Activated CD4-positive, alpha-beta memory T cell treated with anti-CD3 and anti-CD28 coated beads, Interleukin-2, amount 10 ng/mL, durations not matched to agents 7 days and 5 days (primary cell): ENCODE measurements at regions of chr11 and their contacts with region 1.

Region 1: DNA sequence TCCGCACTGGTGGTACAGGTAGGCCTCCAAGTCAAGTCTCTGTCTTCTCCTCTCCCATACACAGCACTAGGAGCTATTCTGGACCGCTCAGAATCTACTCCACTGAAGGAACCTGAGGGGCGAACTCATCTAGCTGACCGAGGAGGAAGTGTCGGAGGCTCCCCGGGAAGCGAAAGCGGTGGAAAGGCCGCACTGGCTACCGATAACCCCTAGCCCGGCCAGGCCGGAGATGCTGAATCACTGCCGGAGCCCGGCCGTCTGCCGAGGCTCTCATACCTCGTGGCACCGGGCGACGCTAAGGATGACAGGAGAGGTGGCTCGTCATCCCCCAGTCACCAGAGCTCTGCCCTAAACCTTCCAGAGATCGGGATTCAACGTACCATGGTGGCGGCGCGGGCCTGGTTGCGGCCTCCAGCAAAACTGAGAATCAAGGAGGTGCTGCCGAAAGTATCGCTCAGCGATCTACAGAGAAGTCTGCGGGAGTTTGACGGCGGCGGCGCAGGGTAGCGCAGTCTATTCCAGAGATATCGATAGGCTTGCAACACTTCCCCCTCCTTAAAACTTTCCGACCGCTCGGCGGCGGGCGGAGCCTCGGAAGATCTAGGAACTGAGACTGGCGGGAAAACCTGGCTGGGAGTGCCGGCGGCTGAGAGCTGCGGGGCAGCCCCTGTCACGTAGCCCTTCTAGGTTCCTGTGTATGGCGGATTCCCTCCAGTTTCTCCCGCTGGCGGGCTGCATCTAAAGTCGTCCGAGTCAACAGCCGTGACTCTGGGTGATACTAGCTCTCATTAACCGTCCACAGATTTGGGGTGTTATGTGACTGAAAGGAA is at the start of gene PSMA1:
- DNase-seq: peak; percentile 95
- H3K4me3 Mint-ChIP-seq: peak within 1 kb of the TSS; percentile 92
- H3K27ac Mint-ChIP-seq: peak within 1 kb of the TSS; percentile 94
- H3K4me1 Mint-ChIP-seq: peaks cover 25% of the 10 kb centered on the region
- H3K27me3 Mint-ChIP-seq: no peaks in the 10 kb centered on the region
- total RNA-seq, gene PSMA1: 232 to 238 TPM

Region 2: DNA sequence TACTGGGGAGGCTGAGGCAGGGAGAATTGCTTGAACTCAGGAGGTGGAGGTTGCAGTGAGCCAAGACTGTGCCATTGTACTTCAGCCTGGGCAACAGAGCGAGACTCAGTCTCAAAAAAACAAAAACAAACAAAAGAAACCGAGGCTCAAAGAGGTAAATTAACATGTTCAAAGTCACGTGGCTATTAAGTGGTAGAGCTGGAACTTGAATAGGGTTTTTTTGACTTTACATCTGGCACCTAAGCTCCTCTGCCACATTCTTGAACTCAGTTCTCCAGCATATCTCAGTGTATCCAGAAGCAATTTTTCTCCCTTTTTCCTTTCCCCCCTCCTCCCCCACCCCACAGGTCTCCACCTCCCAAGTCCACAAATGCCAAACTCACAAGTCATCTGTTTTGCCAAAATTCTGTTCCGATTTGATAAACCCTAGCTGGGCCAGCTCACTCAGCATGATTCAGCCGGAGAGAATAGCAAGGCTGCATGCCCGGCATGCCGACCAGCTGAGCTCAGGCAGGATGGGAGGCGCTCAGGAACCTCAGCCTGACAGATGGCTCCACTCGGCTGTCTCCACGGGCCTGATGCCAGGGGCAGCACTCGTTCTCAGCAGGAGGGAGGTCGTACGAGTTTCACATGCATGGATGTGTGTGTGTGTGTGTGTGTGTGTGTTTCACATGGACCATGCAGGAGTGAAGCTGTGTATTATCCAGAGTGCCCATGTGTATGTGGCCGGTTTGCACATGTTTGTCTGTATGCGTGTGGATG is 97.9 kb before region 1 on chr11:
- CTCF ChIA-PET with region 1: no interaction called
- POLR2A ChIA-PET with region 1: no interaction called
- DNase-seq: no peak
- H3K4me3 Mint-ChIP-seq: no peak overlapping the region
- H3K27ac Mint-ChIP-seq: no peak overlapping the region
- H3K4me1 Mint-ChIP-seq: peaks cover 8% of the 10 kb centered on the region
- H3K27me3 Mint-ChIP-seq: no peaks in the 10 kb centered on the region

Region 3: GRCh38 chr11:14499554-14500180 is 20.5 kb before region 1 on chr11 and contains the start of gene COPB1:
- CTCF ChIA-PET with region 1: interaction called, 8 read pairs
- POLR2A ChIA-PET with region 1: interaction called, 48 read pairs
- DNase-seq: peak; percentile 96
- H3K4me3 Mint-ChIP-seq: peak within 1 kb of the TSS; percentile 98
- H3K27ac Mint-ChIP-seq: peak within 1 kb of the TSS; percentile 91
- H3K4me1 Mint-ChIP-seq: peaks cover 45% of the 10 kb centered on the region
- H3K27me3 Mint-ChIP-seq: no peaks in the 10 kb centered on the region
- total RNA-seq, gene COPB1: 98.0 to 100.0 TPM

Region 4: DNA sequence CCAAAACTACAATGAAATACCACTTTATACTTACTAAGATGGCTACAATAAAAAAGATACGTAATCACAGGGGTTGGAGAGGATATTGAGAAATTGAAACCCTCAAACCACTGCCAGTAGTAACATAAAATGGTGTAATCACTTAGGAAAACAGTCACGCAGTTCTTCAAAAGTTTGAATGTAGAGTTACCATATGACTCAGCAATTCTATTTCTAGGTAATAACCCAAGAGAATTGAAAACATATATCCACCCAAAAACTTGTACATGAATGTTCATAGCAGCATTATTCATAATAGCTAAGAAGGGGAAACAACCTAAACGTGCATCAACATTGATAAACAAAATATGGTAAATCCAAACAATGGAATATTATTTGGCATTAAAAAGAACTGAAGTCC is 24.5 kb after region 1 on chr11:
- CTCF ChIA-PET with region 1: no interaction called
- POLR2A ChIA-PET with region 1: interaction called, 13 read pairs
- DNase-seq: no peak
- H3K4me3 Mint-ChIP-seq: no peak overlapping the region
- H3K27ac Mint-ChIP-seq: peak overlapping the region; percentile 79
- H3K4me1 Mint-ChIP-seq: peaks cover 37% of the 10 kb centered on the region
- H3K27me3 Mint-ChIP-seq: no peaks in the 10 kb centered on the region

Region 5: DNA sequence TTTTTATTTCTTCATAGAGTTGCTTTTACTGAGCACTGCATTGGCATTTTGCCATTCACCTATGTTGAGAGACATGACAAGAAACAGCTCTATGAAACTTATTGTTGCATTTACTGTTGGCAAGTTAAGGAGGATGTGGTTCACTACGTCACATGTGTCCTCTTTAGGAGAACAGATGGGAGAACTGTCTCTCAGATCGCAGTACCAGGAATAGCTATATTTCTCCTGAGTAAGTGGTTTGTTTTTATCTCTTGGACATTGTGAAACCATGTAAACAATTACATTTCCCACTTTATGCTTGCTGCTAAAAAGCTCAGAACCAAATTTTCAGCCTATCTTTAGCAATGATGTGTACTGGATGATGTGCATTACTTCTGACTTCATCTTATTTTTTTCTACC is 34.8 kb after region 1 on chr11:
- CTCF ChIA-PET with region 1: no interaction called
- POLR2A ChIA-PET with region 1: interaction called, 10 read pairs
- DNase-seq: no peak
- H3K4me3 Mint-ChIP-seq: peak overlapping the region; percentile 2
- H3K27ac Mint-ChIP-seq: peak overlapping the region; percentile 85
- H3K4me1 Mint-ChIP-seq: peaks cover 50% of the 10 kb centered on the region
- H3K27me3 Mint-ChIP-seq: no peaks in the 10 kb centered on the region

Region 6: GRCh38 chr11:14764579-14765527 is 244.7 kb after region 1 on chr11:
- CTCF ChIA-PET with region 1: no interaction called
- POLR2A ChIA-PET with region 1: interaction called, 43 read pairs
- DNase-seq: peak; percentile 47
- H3K4me3 Mint-ChIP-seq: peak overlapping the region; percentile 52
- H3K27ac Mint-ChIP-seq: no peak overlapping the region
- H3K4me1 Mint-ChIP-seq: peaks cover 34% of the 10 kb centered on the region
- H3K27me3 Mint-ChIP-seq: no peaks in the 10 kb centered on the region

Region 7: GRCh38 chr11:14892036-14892567 is 372.0 kb after region 1 on chr11 and contains the start of gene CYP2R1:
- CTCF ChIA-PET with region 1: interaction called, 9 read pairs
- POLR2A ChIA-PET with region 1: interaction called, 44 read pairs
- DNase-seq: peak; percentile 94
- H3K4me3 Mint-ChIP-seq: peak within 1 kb of the TSS; percentile 90
- H3K27ac Mint-ChIP-seq: peak within 1 kb of the TSS; percentile 95
- H3K4me1 Mint-ChIP-seq: peaks cover 57% of the 10 kb centered on the region
- H3K27me3 Mint-ChIP-seq: no peaks in the 10 kb centered on the region
- total RNA-seq, gene CYP2R1: 22.2 TPM